Right ventricle myocardium superior (tissue), 1 donor: ENCODE measurements at regions of chr1 and their contacts with region 1.

Region 1: GRCh38 chr1:171644805-171645483 is 7.5 kb downstream of the MYOC start:
- DNase-seq: peak; percentile 77
- ATAC-seq: peak; percentile 88

Region 2: DNA sequence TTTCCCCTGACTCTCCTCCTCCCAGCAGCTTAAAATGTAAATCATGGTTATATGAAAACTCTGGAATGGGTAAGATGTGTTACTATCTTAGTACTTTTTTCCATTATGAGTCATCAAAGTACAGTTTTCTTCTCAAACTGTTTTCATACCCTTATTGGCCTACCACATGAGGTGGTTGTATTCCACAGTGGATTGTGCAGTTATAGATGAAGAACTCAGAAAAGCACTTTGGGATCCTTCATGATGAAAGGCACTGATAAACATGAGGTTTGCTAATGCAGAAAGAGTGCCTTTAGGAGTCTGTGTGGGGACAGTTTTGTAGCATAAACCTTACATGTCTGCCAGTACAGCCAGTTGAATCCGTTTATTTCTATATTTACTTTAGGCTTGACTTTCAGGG is 54.9 kb before region 1 on chr1:
- intact Hi-C with region 1: no loop called
- DNase-seq: no peak
- ATAC-seq: no peak

Region 3: DNA sequence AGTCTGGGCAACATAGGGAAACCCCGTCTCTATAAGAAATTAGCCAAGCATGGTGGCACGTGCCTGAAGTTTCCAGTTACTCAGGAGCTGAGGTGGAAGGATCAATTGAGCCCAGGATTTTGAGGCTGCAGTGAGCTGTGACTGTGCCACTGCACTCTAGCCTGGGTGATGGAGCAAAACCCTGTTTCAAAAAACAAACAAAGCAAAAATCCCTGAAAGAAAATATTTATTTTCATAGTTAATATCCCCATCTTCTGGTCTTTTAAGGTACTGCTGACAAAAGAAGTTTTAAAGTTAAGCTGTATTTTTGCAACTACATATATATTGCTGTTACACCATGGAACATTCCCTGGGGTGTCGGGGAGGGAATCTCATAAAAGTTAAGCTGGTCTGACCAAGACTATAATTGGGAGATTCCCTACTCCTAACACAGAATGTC is 70.9 kb after region 1 on chr1:
- intact Hi-C with region 1: loop called (anchors 5 kb)
- DNase-seq: no peak
- ATAC-seq: peak; percentile 41

Region 4: GRCh38 chr1:171781176-171781875 is 136.4 kb after region 1 on chr1 and contains the start of gene METTL13:
- intact Hi-C with region 1: loop called (anchors 2 kb)
- DNase-seq: peak; percentile 99
- ATAC-seq: peak; percentile 99
- total RNA-seq, gene METTL13: 16.8 TPM

Region 5: DNA sequence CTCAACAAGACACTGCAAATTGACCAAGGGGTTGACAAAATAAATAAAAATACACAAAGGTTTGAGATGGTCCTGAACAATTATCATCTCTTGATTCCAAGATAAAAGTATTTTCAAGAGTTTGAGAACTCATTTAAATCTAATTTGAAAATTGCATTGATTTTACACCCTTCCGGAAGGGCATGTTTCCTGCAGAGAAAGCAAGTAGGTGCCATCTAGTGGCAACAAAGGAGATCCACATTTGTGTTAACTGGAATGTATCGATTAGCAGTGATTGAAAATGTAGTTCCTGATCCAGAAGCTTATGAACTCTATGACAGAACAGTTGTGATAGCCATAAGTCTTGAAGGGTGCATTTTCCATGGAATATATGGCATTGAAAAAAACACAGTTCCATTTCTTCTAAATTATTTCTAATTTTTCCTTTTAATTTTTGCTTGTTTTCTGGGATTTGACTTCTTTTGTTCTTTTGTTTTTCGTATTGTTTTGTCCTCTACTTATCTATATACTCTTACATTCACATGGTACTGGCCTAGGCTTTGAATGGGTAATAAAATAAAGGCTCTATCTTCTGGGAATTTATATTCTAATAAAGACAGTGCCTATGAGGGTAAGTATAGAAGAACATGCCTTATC is 340.0 kb after region 1 on chr1:
- intact Hi-C with region 1: loop called (anchors 5 kb)
- DNase-seq: no peak
- ATAC-seq: peak; percentile 85